Mammary epithelial cell (primary cell): ENCODE measurements at regions of chr10 and their contacts with region 1.

Region 1: GRCh38 chr10:123582084-123582989 is 83.8 kb upstream of the GPR26 start:
- DNase-seq: peak; percentile 47
- H3K4me3 ChIP-seq: no peak overlapping the region
- H3K27ac ChIP-seq: no peak overlapping the region
- H3K4me1 ChIP-seq: no peaks in the 10 kb centered on the region
- H3K27me3 ChIP-seq: peaks cover 5% of the 10 kb centered on the region
- CTCF ChIP-seq: peak; percentile 89 to 92

Region 2: DNA sequence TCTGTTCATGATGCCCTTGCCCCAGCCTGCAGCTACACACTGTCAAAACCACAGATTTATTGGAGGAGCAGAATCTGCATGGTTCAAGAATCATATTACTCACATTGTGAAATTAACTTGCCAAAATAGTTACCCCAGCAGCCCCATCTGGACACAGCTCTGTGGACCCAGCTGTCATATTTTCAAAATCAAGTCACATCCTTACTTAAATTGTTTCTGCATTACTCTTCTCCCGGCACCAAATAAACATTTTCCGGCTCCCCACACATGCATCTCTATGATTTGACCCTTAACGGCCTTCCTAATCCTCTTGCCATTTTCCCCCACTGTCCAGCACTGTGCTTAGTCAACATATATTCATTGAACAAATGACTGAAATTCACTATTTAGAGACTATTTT is 40.0 kb after region 1 on chr10:
- CTCF ChIA-PET with region 1: no interaction called
- dilution Hi-C with region 1: no loop called
- in situ Hi-C with region 1: no loop called
- intact Hi-C with region 1: no loop called
- DNase-seq: no peak
- H3K4me3 ChIP-seq: no peak overlapping the region
- H3K27ac ChIP-seq: no peak overlapping the region
- H3K4me1 ChIP-seq: no peaks in the 10 kb centered on the region
- H3K27me3 ChIP-seq: no peaks in the 10 kb centered on the region
- CTCF ChIP-seq: no peak

Region 3: GRCh38 chr10:123897146-123897545 is 314.8 kb after region 1 on chr10:
- CTCF ChIA-PET with region 1: no interaction called
- dilution Hi-C with region 1: no loop called
- in situ Hi-C with region 1: no loop called
- intact Hi-C with region 1: loop called (anchors 1 kb)
- DNase-seq: no peak
- H3K4me3 ChIP-seq: no peak overlapping the region
- H3K27ac ChIP-seq: no peak overlapping the region
- H3K4me1 ChIP-seq: no peaks in the 10 kb centered on the region
- H3K27me3 ChIP-seq: no peaks in the 10 kb centered on the region
- CTCF ChIP-seq: peak; percentile 12 to 42

Region 4: GRCh38 chr10:123967396-123968243 is 385.3 kb after region 1 on chr10:
- CTCF ChIA-PET with region 1: interaction called, 6 read pairs
- dilution Hi-C with region 1: no loop called
- in situ Hi-C with region 1: loop called (anchors 5 kb)
- intact Hi-C with region 1: loop called (anchors 1 kb)
- DNase-seq: peak; percentile 16
- H3K4me3 ChIP-seq: no peak overlapping the region
- H3K27ac ChIP-seq: no peak overlapping the region
- H3K4me1 ChIP-seq: no peaks in the 10 kb centered on the region
- H3K27me3 ChIP-seq: peaks cover 5% of the 10 kb centered on the region
- CTCF ChIP-seq: peak; percentile 80 to 97

Region 5: GRCh38 chr10:124145109-124145870 is 563.0 kb after region 1 on chr10:
- CTCF ChIA-PET with region 1: no interaction called
- dilution Hi-C with region 1: no loop called
- in situ Hi-C with region 1: no loop called
- intact Hi-C with region 1: no loop called
- DNase-seq: peak; percentile 12
- H3K4me3 ChIP-seq: no peak overlapping the region
- H3K27ac ChIP-seq: no peak overlapping the region
- H3K4me1 ChIP-seq: peaks cover 7% of the 10 kb centered on the region
- H3K27me3 ChIP-seq: no peaks in the 10 kb centered on the region
- CTCF ChIP-seq: no peak

Region 6: DNA sequence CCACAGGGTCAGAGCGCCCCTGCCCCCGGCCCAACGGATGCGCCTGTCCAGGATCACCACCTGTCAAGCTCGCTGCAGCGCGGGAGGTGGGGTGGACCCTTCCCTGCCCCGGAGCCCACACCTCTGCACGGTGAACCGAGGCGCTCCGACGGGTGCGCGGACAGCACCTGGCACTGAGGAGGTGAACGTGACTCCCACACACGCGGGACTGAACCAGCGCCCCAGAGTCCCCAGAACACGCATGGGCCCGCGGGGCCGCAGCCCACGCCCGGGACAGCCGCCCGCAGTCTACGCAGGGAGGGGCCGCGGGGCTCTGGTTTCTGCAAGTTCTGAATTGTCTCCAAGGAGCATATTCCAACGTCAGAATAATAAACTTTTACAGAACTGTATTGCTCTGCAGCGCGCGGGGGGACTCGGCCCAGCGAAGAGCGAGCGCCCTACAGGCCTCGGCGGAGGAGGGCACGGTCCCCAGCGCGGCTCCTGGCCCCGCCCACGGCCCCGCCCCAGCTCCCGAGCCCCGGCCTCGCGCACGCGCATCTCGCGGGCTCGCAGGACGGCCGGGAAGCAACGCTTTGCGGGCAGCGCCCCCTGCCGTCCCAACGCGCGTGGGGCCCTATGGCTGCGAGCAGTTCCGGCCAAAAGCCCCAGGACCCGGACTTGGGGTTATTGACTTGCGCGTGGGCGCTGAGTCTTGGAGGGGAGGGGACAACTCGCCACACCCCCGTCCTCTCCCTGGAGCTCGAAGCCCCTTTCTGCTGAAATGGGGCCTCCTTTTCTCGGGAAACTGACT is 806.7 kb after region 1 on chr10:
- CTCF ChIA-PET with region 1: no interaction called
- dilution Hi-C with region 1: no loop called
- in situ Hi-C with region 1: loop called (anchors 10 kb)
- intact Hi-C with region 1: loop called (anchors 1 kb)
- DNase-seq: peak; percentile 72
- H3K4me3 ChIP-seq: peak overlapping the region; percentile 14 to 33 (median 17)
- H3K27ac ChIP-seq: no peak overlapping the region
- H3K4me1 ChIP-seq: peaks cover 13% of the 10 kb centered on the region
- H3K27me3 ChIP-seq: no peaks in the 10 kb centered on the region
- CTCF ChIP-seq: peak; percentile 62 to 91